ENCODE measurements at regions of chr4 and their contacts with region 1.

Region 1: GRCh38 chr4:10164877-10165283 is 48.3 kb upstream of the WDR1 start:
- DNase-seq: no peak
- ATAC-seq: no peak
- H3K4me3 ChIP-seq: no peak overlapping the region
- H3K27ac ChIP-seq: no peak overlapping the region
- H3K4me1 ChIP-seq: peaks cover 0 to 8% (median 0%) of the 10 kb centered on the region in 3 donors
- H3K27me3 ChIP-seq: no peaks in the 10 kb centered on the region
- CTCF ChIP-seq: peak in 3 of 4 donors; percentile 15 to 22 (median 20)

Region 2: DNA sequence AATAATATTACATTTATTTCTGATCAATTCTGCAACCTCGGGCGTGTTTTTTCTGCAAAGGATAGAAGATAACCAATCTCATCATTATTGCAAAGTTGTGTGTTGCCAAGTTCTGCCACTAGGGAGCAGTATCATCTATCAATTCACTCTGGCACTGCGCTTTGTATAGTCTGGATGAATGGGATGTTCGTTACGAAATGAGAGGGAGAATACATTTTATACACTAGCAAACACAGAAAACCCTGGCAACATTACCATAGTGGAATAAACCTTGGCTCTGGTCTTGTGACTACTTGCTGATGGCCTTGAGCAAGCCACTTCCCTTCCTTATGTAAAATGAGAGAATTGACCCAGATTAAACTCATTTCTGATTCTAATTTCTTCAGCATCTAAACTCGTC is 389.8 kb after region 1 on chr4:
- intact Hi-C with region 1: loop called in 1 of 3 experiments (anchors 5 kb)
- DNase-seq: peak in 2 of 6 donors; percentile 11 to 50
- ATAC-seq: peak; percentile 56 to 87 (median 84)
- H3K4me3 ChIP-seq: no peak overlapping the region
- H3K27ac ChIP-seq: no peak overlapping the region
- H3K4me1 ChIP-seq: no peaks in the 10 kb centered on the region
- H3K27me3 ChIP-seq: peaks cover 0 to 4% (median 0%) of the 10 kb centered on the region in 4 donors
- CTCF ChIP-seq: peak; percentile 65 to 76 (median 71)